Heart right ventricle (tissue), 16 donors: ENCODE measurements at regions of chr14 and their contacts with region 1.

Region 1: GRCh38 chr14:72812292-72812911 is 81.5 kb downstream of the DPF3 start:
- DNase-seq: peak; percentile 72 to 74
- ATAC-seq: peak; percentile 87 to 96 (median 92)
- H3K4me3 ChIP-seq: peak overlapping the region in 4 of 10 donors; percentile 8 to 28 (median 15)
- H3K27ac ChIP-seq: peak overlapping the region; percentile 72 to 90 (median 85)
- H3K4me1 ChIP-seq: peaks cover 12 to 84% (median 44%) of the 10 kb centered on the region in 9 donors
- H3K27me3 ChIP-seq: no peaks in the 10 kb centered on the region
- CTCF ChIP-seq: peak in 3 of 9 donors; percentile 26 to 38 (median 30)

Region 2: DNA sequence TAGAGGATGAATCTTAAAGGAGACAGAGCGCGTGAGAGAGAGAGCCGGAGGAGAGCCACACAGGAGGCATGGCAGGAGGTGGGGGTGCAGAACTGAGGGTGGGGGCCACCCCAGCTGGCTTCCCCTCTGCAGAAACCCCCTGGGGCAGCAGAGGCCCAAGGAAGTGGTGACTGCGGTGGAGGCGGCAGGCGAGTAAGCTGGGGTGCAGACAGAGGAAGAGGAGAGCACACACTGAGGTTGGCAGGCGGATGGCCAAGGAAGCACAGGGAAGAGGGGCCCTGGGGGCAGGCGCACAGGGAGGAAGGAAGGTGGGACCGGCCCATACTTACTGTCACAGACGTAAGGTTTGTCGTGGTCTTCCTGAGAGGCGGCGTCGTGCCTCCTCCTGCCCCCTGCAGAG is 98.3 kb before region 1 on chr14:
- intact Hi-C with region 1: loop called in 1 of 10 experiments (anchors 5 kb)
- DNase-seq: no peak
- ATAC-seq: no peak
- H3K4me3 ChIP-seq: peak overlapping the region in 1 of 10 donors; percentile 9
- H3K27ac ChIP-seq: peak overlapping the region in 9 of 10 donors; percentile 68 to 93 (median 71)
- H3K4me1 ChIP-seq: peaks cover 10 to 56% (median 40%) of the 10 kb centered on the region in 9 donors
- H3K27me3 ChIP-seq: no peaks in the 10 kb centered on the region
- CTCF ChIP-seq: no peak

Region 3: GRCh38 chr14:72850360-72850759 is 38.0 kb after region 1 on chr14:
- intact Hi-C with region 1: no loop called
- DNase-seq: no peak
- ATAC-seq: no peak
- H3K4me3 ChIP-seq: no peak overlapping the region
- H3K27ac ChIP-seq: no peak overlapping the region
- H3K4me1 ChIP-seq: peaks cover 0 to 39% (median 11%) of the 10 kb centered on the region in 9 donors
- H3K27me3 ChIP-seq: no peaks in the 10 kb centered on the region
- CTCF ChIP-seq: no peak